ENCODE measurements at regions of chr9 and their contacts with region 1.

Region 1: GRCh38 chr9:122394265-122395125 is 23.7 kb downstream of the PTGS1 start:
- DNase-seq: no peak
- ATAC-seq: peak in 1 of 2 experiments; percentile 58; a peak in 4 of 6 replicates
- H3K4me3 ChIP-seq: no peak overlapping the region
- H3K27ac ChIP-seq: peak overlapping the region in 1 of 2 experiments; percentile 14; a peak in 1 of 6 replicates
- H3K4me1 ChIP-seq: peaks cover 12% of the 10 kb centered on the region; the same call in 2 of the 3 replicates
- CTCF ChIP-seq: no peak
- EP300 ChIP-seq: no peak
- POLR2A ChIP-seq: no peak
- RAD21 ChIP-seq: no peak

Region 2: GRCh38 chr9:122383992-122384461 is 10.5 kb before region 1 on chr9:
- CTCF ChIA-PET with region 1: interaction called, 17 read pairs
- POLR2A ChIA-PET with region 1: no interaction called
- DNase-seq: peak in 1 of 2 experiments; percentile 36
- ATAC-seq: peak; percentile 65 to 75; a peak in 4 of 6 replicates
- H3K4me3 ChIP-seq: no peak overlapping the region
- H3K27ac ChIP-seq: peak overlapping the region; percentile 53 to 84
- H3K4me1 ChIP-seq: peaks cover 20% of the 10 kb centered on the region
- CTCF ChIP-seq: no peak
- EP300 ChIP-seq: no peak
- POLR2A ChIP-seq: no peak
- RAD21 ChIP-seq: no peak

Measured in A549 (cell line).